ENCODE measurements at regions of chr12 and their contacts with region 1.

Region 1: DNA sequence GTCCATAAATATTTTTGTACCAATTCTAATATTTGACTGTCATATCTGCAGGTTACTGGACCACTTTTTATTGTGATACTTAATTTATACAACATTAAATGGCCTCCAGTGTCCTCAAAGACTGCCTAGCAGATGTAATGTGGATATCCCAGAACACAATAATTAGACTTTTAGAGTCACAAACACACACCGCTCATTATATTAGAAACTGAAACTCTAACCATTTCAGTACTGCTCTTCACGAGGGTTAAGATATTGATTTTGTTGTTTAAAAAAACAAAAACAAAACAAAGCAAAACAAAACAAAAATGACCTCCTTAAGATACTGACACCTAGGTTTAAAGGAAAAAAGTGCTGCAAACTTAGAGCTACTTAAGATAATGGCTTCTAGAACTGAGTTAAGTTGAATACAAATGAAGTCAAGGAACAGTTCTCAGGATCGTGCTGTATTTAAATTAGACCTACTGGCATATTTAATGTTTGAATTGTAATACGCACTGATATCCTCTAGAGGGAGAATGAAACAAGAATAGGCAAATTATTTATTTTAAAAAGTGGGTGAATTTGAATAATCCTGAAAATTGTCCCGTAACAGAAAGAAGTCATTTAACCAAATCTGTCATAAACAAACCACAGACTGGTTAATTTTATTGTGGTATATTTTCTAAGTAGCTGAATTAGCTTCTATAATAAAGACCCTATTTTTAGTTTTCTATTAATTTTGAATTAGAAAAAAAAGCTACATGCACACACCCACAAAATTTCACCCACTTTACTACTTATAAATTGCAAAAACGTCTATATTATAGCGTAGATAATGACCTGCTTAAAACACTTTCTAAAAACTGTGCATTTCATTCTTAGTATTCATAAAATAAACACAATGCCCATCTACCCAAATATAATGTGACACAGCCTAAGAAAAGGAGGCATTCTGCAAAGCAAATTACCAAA is 395.2 kb upstream of the DCN start:
- DNase-seq: no peak
- H3K4me3 Mint-ChIP-seq: peak overlapping the region; percentile 63
- H3K27ac Mint-ChIP-seq: no peak overlapping the region
- H3K4me1 Mint-ChIP-seq: peaks cover 4% of the 10 kb centered on the region
- H3K27me3 Mint-ChIP-seq: peaks cover 2% of the 10 kb centered on the region

Region 2: GRCh38 chr12:91053951-91054715 is 523.7 kb before region 1 on chr12:
- CTCF ChIA-PET with region 1: no interaction called
- POLR2A ChIA-PET with region 1: no interaction called
- intact Hi-C with region 1: no loop called
- DNase-seq: no peak
- H3K4me3 Mint-ChIP-seq: no peak overlapping the region
- H3K27ac Mint-ChIP-seq: no peak overlapping the region
- H3K4me1 Mint-ChIP-seq: no peaks in the 10 kb centered on the region
- H3K27me3 Mint-ChIP-seq: peaks cover 6% of the 10 kb centered on the region

Region 3: GRCh38 chr12:92593734-92594402 is 1016.0 kb after region 1 on chr12:
- CTCF ChIA-PET with region 1: interaction called, 3 read pairs
- POLR2A ChIA-PET with region 1: no interaction called
- intact Hi-C with region 1: loop called (anchors 10 kb)
- DNase-seq: peak; percentile 87
- H3K4me3 Mint-ChIP-seq: peak overlapping the region; percentile 25
- H3K27ac Mint-ChIP-seq: peak overlapping the region; percentile 92
- H3K4me1 Mint-ChIP-seq: peaks cover 80% of the 10 kb centered on the region
- H3K27me3 Mint-ChIP-seq: no peaks in the 10 kb centered on the region